ENCODE measurements at regions of chr7 and their contacts with region 1.

Region 1: DNA sequence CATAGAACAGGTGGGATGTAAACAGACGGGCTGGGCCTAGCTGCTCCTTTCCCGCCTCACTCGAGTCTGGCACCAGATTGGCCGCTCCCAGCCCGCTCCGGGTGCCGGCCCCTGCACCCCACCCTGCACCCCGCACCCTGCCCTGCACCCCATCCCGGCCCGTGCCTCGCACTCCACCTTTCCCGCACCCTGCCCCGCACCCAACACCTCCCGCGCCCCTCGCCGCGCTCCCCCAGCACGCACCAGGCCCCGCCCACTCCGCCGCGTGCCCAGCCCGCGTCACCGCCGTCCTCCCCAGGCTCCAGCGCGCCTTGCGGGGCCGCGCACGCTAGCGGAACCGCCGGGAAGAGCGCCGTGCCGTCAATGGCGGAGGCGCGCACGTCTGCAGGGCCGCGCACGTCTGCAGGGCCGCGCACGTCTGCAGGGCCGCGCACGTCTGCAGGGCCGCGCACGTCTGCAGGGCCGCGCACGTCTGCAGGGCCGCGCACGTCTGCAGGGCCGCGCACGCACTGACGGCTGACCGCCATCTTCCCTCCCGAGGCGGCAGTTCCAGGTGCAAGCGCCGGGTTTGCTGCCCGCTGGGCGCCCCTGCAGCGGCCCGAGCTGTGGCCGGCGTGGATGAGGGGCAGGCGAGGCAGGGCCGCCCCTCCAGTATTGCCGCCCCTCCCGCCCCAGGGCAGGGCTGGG is at the start of gene UBE3C:
- DNase-seq: peak; percentile 76 to 97 (median 87)
- ATAC-seq: peak; percentile 85 to 90 (median 85)
- H3K4me3 ChIP-seq: peak within 1 kb of the TSS; percentile 33 to 59
- H3K4me3 Mint-ChIP-seq: peak within 1 kb of the TSS; percentile 68 to 82 (median 79)
- H3K27ac ChIP-seq: peak within 1 kb of the TSS; percentile 83
- H3K27ac Mint-ChIP-seq: peak within 1 kb of the TSS; percentile 82 to 87
- H3K4me1 ChIP-seq: peaks cover 23 to 39% of the 10 kb centered on the region in 2 experiments
- H3K4me1 Mint-ChIP-seq: peaks cover 37 to 41% (median 39%) of the 10 kb centered on the region in 3 donors
- H3K27me3 ChIP-seq: peaks cover 0 to 5% of the 10 kb centered on the region in 2 experiments
- H3K27me3 Mint-ChIP-seq: no peaks in the 10 kb centered on the region
- total RNA-seq, gene UBE3C: 50.1 to 56.8 (median 55.1) TPM

Region 2: GRCh38 chr7:157113607-157114006 is 25.0 kb before region 1 on chr7:
- CTCF ChIA-PET with region 1: no interaction called
- POLR2A ChIA-PET with region 1: no interaction called
- DNase-seq: no peak
- ATAC-seq: no peak
- H3K4me3 ChIP-seq: no peak overlapping the region
- H3K4me3 Mint-ChIP-seq: no peak overlapping the region
- H3K27ac ChIP-seq: no peak overlapping the region
- H3K27ac Mint-ChIP-seq: no peak overlapping the region
- H3K4me1 ChIP-seq: no peaks in the 10 kb centered on the region
- H3K4me1 Mint-ChIP-seq: no peaks in the 10 kb centered on the region
- H3K27me3 ChIP-seq: peaks cover 0 to 27% of the 10 kb centered on the region in 2 experiments
- H3K27me3 Mint-ChIP-seq: peaks cover 5 to 27% of the 10 kb centered on the region in 2 donors

Region 3: DNA sequence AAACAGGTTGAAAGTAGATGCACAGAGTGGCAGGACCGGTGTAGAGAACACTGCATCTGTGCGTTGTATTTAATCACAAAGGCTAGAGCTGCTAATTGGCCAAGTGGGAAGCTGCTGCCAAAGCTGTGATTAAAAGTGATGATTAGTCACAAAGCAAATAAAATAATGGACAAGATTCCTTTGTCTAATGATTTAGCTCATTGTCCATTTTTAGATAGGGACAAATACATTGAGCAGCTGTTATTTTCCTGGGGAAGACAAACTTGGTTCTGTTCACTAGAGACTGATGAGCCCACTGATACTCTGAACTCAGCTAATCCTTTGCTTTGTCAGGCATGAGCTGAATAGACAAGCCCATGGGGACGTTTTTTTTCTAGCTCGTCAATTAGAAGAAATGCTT is 19.8 kb after region 1 on chr7:
- CTCF ChIA-PET with region 1: interaction called in 1 of 2 experiments, 12 read pairs
- POLR2A ChIA-PET with region 1: no interaction called
- DNase-seq: no peak
- ATAC-seq: no peak
- H3K4me3 ChIP-seq: no peak overlapping the region
- H3K4me3 Mint-ChIP-seq: no peak overlapping the region
- H3K27ac ChIP-seq: no peak overlapping the region
- H3K27ac Mint-ChIP-seq: no peak overlapping the region
- H3K4me1 ChIP-seq: peaks cover 0 to 4% of the 10 kb centered on the region in 2 experiments
- H3K4me1 Mint-ChIP-seq: peaks cover 35 to 66% (median 55%) of the 10 kb centered on the region in 3 donors
- H3K27me3 ChIP-seq: no peaks in the 10 kb centered on the region
- H3K27me3 Mint-ChIP-seq: no peaks in the 10 kb centered on the region

Region 4: GRCh38 chr7:157168571-157168970 is 30.0 kb after region 1 on chr7:
- CTCF ChIA-PET with region 1: no interaction called
- POLR2A ChIA-PET with region 1: no interaction called
- DNase-seq: no peak
- ATAC-seq: no peak
- H3K4me3 ChIP-seq: no peak overlapping the region
- H3K4me3 Mint-ChIP-seq: no peak overlapping the region
- H3K27ac ChIP-seq: no peak overlapping the region
- H3K27ac Mint-ChIP-seq: no peak overlapping the region
- H3K4me1 ChIP-seq: no peaks in the 10 kb centered on the region
- H3K4me1 Mint-ChIP-seq: peaks cover 0 to 6% (median 4%) of the 10 kb centered on the region in 3 donors
- H3K27me3 ChIP-seq: no peaks in the 10 kb centered on the region
- H3K27me3 Mint-ChIP-seq: no peaks in the 10 kb centered on the region

Region 5: GRCh38 chr7:158164101-158165095 is 1025.8 kb after region 1 on chr7:
- CTCF ChIA-PET with region 1: no interaction called
- POLR2A ChIA-PET with region 1: no interaction called
- DNase-seq: no peak
- ATAC-seq: no peak
- H3K4me3 ChIP-seq: no peak overlapping the region
- H3K4me3 Mint-ChIP-seq: no peak overlapping the region
- H3K27ac ChIP-seq: no peak overlapping the region
- H3K27ac Mint-ChIP-seq: no peak overlapping the region
- H3K4me1 ChIP-seq: no peaks in the 10 kb centered on the region
- H3K4me1 Mint-ChIP-seq: no peaks in the 10 kb centered on the region
- H3K27me3 ChIP-seq: no peaks in the 10 kb centered on the region
- H3K27me3 Mint-ChIP-seq: no peaks in the 10 kb centered on the region